Activated CD8-positive, alpha-beta memory T cell treated with anti-CD3 and anti-CD28 coated beads, Interleukin-2, amount 10 ng/mL, durations not matched to agents 7 days and 5 days (primary cell): ENCODE measurements at regions of chr6 and their contacts with region 1.

Region 1: DNA sequence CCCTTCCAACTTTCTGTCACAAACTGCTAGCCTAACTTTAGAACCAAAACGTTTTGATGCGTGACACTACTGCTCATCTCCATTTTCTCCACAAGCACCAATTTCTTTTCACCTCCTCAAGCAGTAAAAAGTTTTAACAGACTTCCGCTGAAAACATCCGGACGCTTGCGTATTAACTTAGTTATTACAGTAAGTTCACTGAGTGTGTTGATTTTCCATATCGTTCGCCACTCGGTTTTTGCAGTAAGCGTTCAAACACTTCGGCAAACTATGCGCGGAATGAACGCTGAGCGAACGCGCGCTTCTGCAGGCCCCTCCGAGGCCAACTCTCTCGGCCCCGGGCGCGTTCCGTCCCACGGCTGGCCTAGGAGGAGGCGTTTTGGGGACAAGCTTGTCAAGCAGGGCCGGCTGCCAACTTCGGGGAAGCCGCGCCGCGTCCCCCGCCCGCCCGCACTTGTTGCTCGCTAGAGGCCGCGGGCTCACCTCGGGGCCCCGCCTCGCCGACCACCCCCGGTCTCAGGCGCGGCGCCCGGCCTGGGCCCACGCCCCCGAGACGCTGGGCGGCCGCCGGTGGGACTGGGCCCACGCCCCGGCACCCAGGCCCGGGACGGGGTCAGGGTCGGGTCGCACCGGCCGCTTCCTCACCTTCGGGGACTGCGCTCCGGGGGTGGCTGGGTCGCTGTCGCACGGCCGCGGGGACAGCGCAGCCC is 945 bp downstream of the PHF10 start:
- DNase-seq: peak; percentile 74
- ATAC-seq: peak; percentile 42
- H3K4me3 Mint-ChIP-seq: peak overlapping the region; percentile 86
- H3K27ac Mint-ChIP-seq: peak overlapping the region; percentile 94
- H3K4me1 Mint-ChIP-seq: peaks cover 37% of the 10 kb centered on the region
- H3K27me3 Mint-ChIP-seq: no peaks in the 10 kb centered on the region

Region 2: GRCh38 chr6:169701954-169702839 is 21.2 kb before region 1 on chr6 and contains the starts of genes C6orf120 and WDR27:
- CTCF ChIA-PET with region 1: interaction called, 37 read pairs
- DNase-seq: peak; percentile 97
- ATAC-seq: peak; percentile 94
- H3K4me3 Mint-ChIP-seq: peak within 1 kb of the TSS; percentile 92
- H3K27ac Mint-ChIP-seq: peak within 1 kb of the TSS; percentile 94
- H3K4me1 Mint-ChIP-seq: peaks cover 49% of the 10 kb centered on the region
- H3K27me3 Mint-ChIP-seq: no peaks in the 10 kb centered on the region
- total RNA-seq, gene C6orf120: 19.3 to 20.3 TPM
- total RNA-seq, gene WDR27: 31.2 to 36.2 TPM

Region 3: GRCh38 chr6:169738204-169738975 is 15.0 kb after region 1 on chr6:
- CTCF ChIA-PET with region 1: no interaction called
- DNase-seq: no peak
- ATAC-seq: no peak
- H3K4me3 Mint-ChIP-seq: no peak overlapping the region
- H3K27ac Mint-ChIP-seq: no peak overlapping the region
- H3K4me1 Mint-ChIP-seq: no peaks in the 10 kb centered on the region
- H3K27me3 Mint-ChIP-seq: peaks cover 37% of the 10 kb centered on the region

Region 4: GRCh38 chr6:169766232-169766631 is 42.9 kb after region 1 on chr6:
- CTCF ChIA-PET with region 1: no interaction called
- DNase-seq: no peak
- ATAC-seq: no peak
- H3K4me3 Mint-ChIP-seq: no peak overlapping the region
- H3K27ac Mint-ChIP-seq: no peak overlapping the region
- H3K4me1 Mint-ChIP-seq: no peaks in the 10 kb centered on the region
- H3K27me3 Mint-ChIP-seq: no peaks in the 10 kb centered on the region